Mammary epithelial cell (primary cell): ENCODE measurements at regions of chr14 and their contacts with region 1.

Region 1: DNA sequence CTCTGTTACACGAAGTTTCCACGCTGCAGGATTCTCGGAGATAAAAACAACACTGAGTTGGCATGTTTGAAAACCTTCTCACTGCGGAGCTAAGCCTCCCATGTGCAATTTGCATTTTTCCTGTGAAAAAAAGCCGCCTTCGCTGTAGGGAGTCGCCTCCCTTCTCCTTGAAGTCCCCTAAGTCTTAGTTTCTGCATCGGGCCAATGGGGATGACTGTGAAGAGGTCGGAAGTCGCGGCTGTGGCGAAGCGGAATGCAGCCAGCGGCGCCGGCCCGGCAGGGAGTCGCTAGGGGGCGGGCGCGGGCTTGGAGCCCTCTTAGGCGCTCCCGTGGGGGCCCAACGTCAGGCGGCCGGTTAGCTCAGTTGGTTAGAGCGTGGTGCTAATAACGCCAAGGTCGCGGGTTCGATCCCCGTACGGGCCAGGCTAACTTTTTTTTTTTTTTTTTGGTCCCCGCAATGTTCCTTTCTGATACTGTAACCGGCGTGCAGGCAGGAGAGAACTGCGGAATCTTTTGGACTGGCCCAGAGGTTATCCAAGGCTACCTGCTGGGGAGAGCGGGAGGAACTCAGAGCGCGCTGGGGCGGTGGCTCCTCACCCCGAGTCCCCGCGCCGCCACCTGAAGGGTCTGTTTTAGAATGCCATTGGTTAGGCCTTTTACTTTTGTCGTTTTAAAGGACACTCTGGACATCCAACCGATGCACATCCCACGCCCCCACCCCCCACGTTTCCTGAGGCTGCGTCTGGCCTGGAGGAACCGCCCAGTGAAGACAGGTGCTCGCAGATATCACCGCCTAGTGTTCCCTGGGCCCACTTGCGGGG is 2.6 kb upstream of the ZNF839 start:
- DNase-seq: peak; percentile 82
- H3K4me3 ChIP-seq: peak overlapping the region; percentile 47 to 67 (median 48)
- H3K27ac ChIP-seq: peak overlapping the region; percentile 50
- H3K4me1 ChIP-seq: peaks cover 52% of the 10 kb centered on the region
- H3K27me3 ChIP-seq: no peaks in the 10 kb centered on the region
- CTCF ChIP-seq: peak; percentile 37 to 86

Region 2: DNA sequence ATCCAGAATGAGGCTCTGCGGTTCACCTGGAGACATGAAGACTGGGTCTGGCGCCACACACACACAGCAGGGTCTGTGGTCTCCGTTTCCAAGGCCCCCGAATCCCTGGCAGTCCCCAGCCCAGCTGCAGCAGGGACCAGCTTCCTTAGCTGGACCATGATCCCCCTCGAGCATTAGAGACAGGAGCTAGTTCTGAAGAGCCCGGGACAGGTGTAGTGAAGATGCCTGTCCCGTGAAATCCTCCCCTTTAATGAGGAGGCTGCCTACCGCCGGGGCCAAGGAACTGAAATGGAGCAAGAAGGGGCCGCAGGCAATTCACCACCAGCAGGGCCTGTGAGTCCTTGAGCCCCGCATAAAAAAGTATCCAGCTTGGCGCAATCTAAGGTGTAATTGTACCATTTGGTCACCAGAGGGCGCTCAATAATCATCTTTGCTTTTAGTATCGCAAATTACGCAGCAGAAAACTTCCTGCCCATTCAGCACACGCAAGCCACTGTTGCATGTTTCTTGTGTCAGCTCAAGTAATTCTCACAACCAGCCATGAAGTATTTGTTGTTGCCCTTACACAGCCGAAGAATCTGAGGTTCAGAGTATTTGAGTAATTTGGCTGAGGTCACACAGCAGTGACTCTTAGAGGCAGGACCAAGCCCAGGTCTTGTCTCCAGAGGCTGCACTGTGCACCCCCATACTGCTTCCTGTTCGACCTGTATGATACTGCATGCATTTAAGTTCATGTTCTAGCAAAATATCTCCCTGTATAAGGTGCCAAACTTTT is 609.7 kb before region 1 on chr14:
- CTCF ChIA-PET with region 1: no interaction called
- dilution Hi-C with region 1: no loop called
- in situ Hi-C with region 1: no loop called
- intact Hi-C with region 1: loop called (anchors 5 kb)
- DNase-seq: peak; percentile 58
- H3K4me3 ChIP-seq: no peak overlapping the region
- H3K27ac ChIP-seq: no peak overlapping the region
- H3K4me1 ChIP-seq: peaks cover 10% of the 10 kb centered on the region
- H3K27me3 ChIP-seq: no peaks in the 10 kb centered on the region
- CTCF ChIP-seq: peak; percentile 66 to 71

Region 3: DNA sequence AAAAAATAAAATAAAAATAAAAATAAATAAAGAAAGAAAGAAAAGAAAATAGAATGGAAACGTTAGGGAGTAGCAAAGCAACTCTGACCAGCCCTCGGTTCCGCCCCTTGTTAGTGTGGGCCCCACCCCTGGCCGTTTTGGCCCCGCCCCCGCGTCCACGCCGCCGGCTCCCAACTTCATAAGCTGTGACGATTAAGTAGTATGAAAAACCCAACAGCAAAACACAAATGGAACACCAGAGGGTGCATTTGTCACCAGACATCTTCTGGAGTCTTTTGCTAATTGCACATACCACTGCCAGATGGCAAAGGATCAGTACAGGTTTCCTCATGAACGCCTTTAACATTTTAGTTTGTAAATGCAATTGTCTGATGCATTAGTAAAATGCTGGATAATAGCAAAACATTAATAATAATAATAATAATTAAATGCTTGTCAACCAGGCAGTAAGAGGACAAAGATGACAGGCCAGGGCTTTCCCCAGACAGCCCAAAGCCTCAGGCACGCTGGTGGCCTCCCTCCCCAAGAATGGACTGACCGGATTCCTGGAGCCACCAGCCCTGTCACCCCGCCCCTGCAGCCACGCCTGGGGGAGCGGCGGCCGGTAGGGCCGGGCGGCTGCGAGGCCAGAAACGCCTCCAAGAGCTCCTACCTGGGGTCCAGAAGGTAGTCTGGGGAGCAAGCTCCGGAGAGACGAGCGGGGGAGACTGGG is 253.7 kb before region 1 on chr14:
- CTCF ChIA-PET with region 1: no interaction called
- dilution Hi-C with region 1: no loop called
- in situ Hi-C with region 1: no loop called
- intact Hi-C with region 1: loop called (anchors 1 kb)
- DNase-seq: peak; percentile 84
- H3K4me3 ChIP-seq: no peak overlapping the region
- H3K27ac ChIP-seq: no peak overlapping the region
- H3K4me1 ChIP-seq: peaks cover 10% of the 10 kb centered on the region
- H3K27me3 ChIP-seq: no peaks in the 10 kb centered on the region
- CTCF ChIP-seq: peak; percentile 43 to 62

Region 4: DNA sequence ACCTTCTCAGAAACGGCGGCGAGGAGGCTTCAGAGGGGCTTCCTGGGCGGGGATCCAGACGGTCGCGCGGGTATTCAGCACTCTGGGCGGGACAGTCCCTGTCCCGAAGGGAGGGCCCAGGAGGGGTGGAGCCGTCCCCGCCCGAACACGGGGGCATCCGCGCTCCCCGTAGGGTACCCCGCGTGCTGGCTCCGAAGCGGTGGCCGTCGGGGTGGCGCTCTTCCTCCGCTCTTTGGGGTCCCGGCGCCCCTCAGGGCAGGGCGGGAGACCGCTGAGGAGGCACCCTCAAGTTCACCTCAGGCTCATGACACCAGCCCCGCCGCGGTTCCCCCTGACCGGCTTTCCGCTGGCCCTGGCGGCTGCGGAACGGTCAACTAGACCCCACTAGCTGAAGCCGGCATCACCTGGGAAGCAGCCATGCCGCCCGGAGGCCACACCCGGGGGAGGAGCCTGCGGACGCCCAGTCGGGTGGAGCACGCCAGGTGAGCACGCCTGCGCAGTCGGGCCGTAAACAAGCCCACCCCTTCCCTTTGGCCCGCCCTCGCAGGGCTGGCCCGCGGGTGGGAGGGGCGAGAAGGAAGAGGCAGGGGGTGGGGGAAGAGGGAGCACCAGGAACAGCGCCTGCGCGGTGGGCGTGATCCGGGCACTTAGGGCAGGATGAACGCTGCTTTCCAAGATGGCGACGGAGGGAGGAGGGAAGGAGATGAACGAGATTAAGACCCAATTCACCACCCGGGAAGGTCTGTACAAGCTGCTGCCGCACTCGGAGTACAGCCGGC is 177.5 kb before region 1 on chr14 and contains the start of gene WDR20:
- CTCF ChIA-PET with region 1: no interaction called
- dilution Hi-C with region 1: no loop called
- in situ Hi-C with region 1: no loop called
- intact Hi-C with region 1: loop called (anchors 2 kb)
- DNase-seq: peak; percentile 98
- H3K4me3 ChIP-seq: peak within 1 kb of the TSS; percentile 89 to 99 (median 95)
- H3K27ac ChIP-seq: peak within 1 kb of the TSS; percentile 74
- H3K4me1 ChIP-seq: peaks cover 6% of the 10 kb centered on the region
- H3K27me3 ChIP-seq: no peaks in the 10 kb centered on the region
- CTCF ChIP-seq: peak in 1 of 2 donors; percentile 23
- total RNA-seq, gene WDR20: 25.3 to 27.3 TPM

Region 5: GRCh38 chr14:102229071-102229738 is 87.7 kb before region 1 on chr14:
- CTCF ChIA-PET with region 1: interaction called, 11 read pairs
- dilution Hi-C with region 1: no loop called
- in situ Hi-C with region 1: no loop called
- intact Hi-C with region 1: no loop called
- DNase-seq: no peak
- H3K4me3 ChIP-seq: no peak overlapping the region
- H3K27ac ChIP-seq: no peak overlapping the region
- H3K4me1 ChIP-seq: no peaks in the 10 kb centered on the region
- H3K27me3 ChIP-seq: no peaks in the 10 kb centered on the region
- CTCF ChIP-seq: no peak

Region 6: DNA sequence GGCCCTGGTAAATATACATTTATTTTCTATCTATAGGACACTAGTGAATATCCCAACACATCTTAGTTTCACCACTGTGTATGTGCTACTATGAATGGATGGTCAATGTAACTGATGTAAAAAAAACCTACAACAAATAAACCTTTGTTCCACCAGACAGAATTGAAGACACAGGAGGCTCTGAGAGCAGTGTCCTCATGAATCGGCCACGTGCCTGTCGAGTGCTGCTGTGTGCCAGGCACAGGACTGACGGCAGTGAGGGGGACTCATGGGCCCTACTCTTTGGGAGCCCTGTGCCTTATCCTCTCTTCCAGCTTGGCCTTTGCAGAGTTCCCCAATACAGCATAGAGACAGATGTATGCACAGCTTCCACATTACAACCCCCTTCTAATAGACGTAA is 27.5 kb after region 1 on chr14:
- CTCF ChIA-PET with region 1: no interaction called
- dilution Hi-C with region 1: no loop called
- in situ Hi-C with region 1: no loop called
- intact Hi-C with region 1: no loop called
- DNase-seq: no peak
- H3K4me3 ChIP-seq: no peak overlapping the region
- H3K27ac ChIP-seq: no peak overlapping the region
- H3K4me1 ChIP-seq: no peaks in the 10 kb centered on the region
- H3K27me3 ChIP-seq: no peaks in the 10 kb centered on the region
- CTCF ChIP-seq: no peak

Region 7: DNA sequence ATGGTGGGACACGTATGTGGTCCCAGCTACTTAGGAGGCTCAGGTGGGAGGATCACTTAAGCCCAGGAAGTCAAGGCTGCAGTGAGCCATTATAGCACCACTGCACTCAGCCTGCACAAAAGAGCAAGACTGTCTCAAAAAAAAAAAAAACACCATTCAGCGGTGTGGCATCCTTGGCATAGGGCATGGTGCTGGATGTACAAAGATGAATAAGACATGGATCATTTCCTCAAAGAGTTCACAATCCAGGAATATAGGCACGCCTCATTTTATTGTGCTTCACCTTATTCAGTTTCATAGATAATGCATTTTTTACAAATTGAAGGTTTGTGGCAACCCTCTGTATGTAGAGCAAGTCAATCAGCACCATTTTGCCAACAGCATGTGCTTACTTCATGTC is 39.3 kb after region 1 on chr14:
- CTCF ChIA-PET with region 1: no interaction called
- dilution Hi-C with region 1: loop called (anchors 5 kb)
- in situ Hi-C with region 1: no loop called
- intact Hi-C with region 1: no loop called
- DNase-seq: no peak
- H3K4me3 ChIP-seq: no peak overlapping the region
- H3K27ac ChIP-seq: no peak overlapping the region
- H3K4me1 ChIP-seq: no peaks in the 10 kb centered on the region
- H3K27me3 ChIP-seq: no peaks in the 10 kb centered on the region
- CTCF ChIP-seq: no peak